Naive thymus-derived CD4-positive, alpha-beta T cell (primary cell): ENCODE measurements at regions of chr13 and their contacts with region 1.

Region 1: GRCh38 chr13:88945793-88946192 is 1274.6 kb downstream of the SLITRK5 start:
- DNase-seq: no peak
- ATAC-seq: no peak
- H3K4me3 ChIP-seq: no peak overlapping the region
- H3K4me3 Mint-ChIP-seq: no peak overlapping the region
- H3K27ac ChIP-seq: no peak overlapping the region
- H3K27ac Mint-ChIP-seq: no peak overlapping the region
- H3K4me1 ChIP-seq: no peaks in the 10 kb centered on the region
- H3K4me1 Mint-ChIP-seq: no peaks in the 10 kb centered on the region
- H3K27me3 ChIP-seq: no peaks in the 10 kb centered on the region
- H3K27me3 Mint-ChIP-seq: no peaks in the 10 kb centered on the region

Region 2: GRCh38 chr13:88958821-88959220 is 13.0 kb after region 1 on chr13:
- CTCF ChIA-PET with region 1: no interaction called
- POLR2A ChIA-PET with region 1: no interaction called
- intact Hi-C with region 1: loop called in 1 of 2 experiments (anchors 1 kb)
- DNase-seq: no peak
- ATAC-seq: no peak
- H3K4me3 ChIP-seq: no peak overlapping the region
- H3K4me3 Mint-ChIP-seq: no peak overlapping the region
- H3K27ac ChIP-seq: no peak overlapping the region
- H3K27ac Mint-ChIP-seq: no peak overlapping the region
- H3K4me1 ChIP-seq: no peaks in the 10 kb centered on the region
- H3K4me1 Mint-ChIP-seq: no peaks in the 10 kb centered on the region
- H3K27me3 ChIP-seq: no peaks in the 10 kb centered on the region
- H3K27me3 Mint-ChIP-seq: no peaks in the 10 kb centered on the region